ENCODE measurements at regions of chr7 and their contacts with region 1.

Region 1: GRCh38 chr7:32803406-32804141 is 88.0 kb downstream of the KBTBD2 start:
- DNase-seq: no peak
- ATAC-seq: no peak
- H3K4me3 ChIP-seq: no peak overlapping the region
- H3K27ac ChIP-seq: no peak overlapping the region
- H3K4me1 ChIP-seq: peaks cover 0 to 5% (median 0%) of the 10 kb centered on the region in 12 donors
- H3K27me3 ChIP-seq: no peaks in the 10 kb centered on the region
- CTCF ChIP-seq: no peak
- POLR2A ChIP-seq: no peak

Region 2: GRCh38 chr7:32865448-32866030 is 62.0 kb after region 1 on chr7:
- intact Hi-C with region 1: no loop called
- DNase-seq: no peak
- ATAC-seq: no peak
- H3K4me3 ChIP-seq: no peak overlapping the region
- H3K27ac ChIP-seq: no peak overlapping the region
- H3K4me1 ChIP-seq: peaks cover 0 to 22% (median 2%) of the 10 kb centered on the region in 12 donors
- H3K27me3 ChIP-seq: no peaks in the 10 kb centered on the region
- CTCF ChIP-seq: no peak
- POLR2A ChIP-seq: no peak

Region 3: GRCh38 chr7:32879460-32879859 is 75.9 kb after region 1 on chr7:
- intact Hi-C with region 1: no loop called
- DNase-seq: no peak
- ATAC-seq: peak in 3 of 4 donors; percentile 18 to 31 (median 28)
- H3K4me3 ChIP-seq: peak overlapping the region in 1 of 12 donors; percentile 5
- H3K27ac ChIP-seq: peak overlapping the region in 11 of 12 donors; percentile 9 to 73 (median 48)
- H3K4me1 ChIP-seq: peaks cover 0 to 94% (median 57%) of the 10 kb centered on the region in 12 donors
- H3K27me3 ChIP-seq: no peaks in the 10 kb centered on the region
- CTCF ChIP-seq: no peak
- POLR2A ChIP-seq: no peak

Region 4: DNA sequence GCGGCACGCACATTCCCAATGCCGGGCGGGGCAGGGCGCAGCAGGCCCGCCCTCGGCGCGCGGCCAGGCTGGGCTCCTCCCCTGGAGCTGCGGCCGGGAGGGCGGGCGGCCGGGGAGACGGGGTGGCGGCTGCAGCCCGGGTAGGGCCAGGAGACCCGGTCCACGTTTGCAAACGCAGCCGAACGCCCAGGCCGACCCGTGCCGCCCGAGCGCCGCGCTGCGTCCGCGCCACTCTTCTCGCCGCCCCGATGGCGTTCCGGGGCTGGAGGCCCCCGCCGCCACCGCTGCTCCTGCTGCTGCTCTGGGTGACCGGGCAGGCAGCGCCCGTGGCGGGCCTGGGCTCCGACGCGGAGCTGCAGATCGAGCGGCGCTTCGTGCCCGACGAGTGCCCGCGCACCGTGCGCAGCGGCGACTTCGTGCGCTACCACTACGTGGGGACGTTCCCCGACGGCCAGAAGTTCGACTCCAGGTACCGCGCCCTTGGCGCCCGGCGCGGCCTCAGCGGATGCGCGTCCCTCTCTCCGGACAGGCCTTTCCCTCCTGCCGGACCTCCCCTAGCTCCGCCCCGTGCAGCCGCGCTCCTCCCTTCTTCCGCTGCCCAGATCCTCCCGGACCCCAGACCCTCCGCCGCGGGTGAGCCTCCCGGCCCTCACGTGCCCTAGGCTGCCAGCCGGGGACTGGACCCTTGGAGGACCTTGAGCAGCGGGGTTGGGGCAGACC is 153.9 kb after region 1 on chr7 and contains the start of gene FKBP9:
- intact Hi-C with region 1: no loop called
- DNase-seq: peak; percentile 85 to 96 (median 90)
- ATAC-seq: peak; percentile 85 to 97 (median 94)
- H3K4me3 ChIP-seq: peak within 1 kb of the TSS; percentile 79 to 100 (median 92)
- H3K27ac ChIP-seq: peak within 1 kb of the TSS; percentile 89 to 100 (median 98)
- H3K4me1 ChIP-seq: peaks cover 0 to 32% (median 13%) of the 10 kb centered on the region in 12 donors
- H3K27me3 ChIP-seq: no peaks in the 10 kb centered on the region
- CTCF ChIP-seq: peak in 1 of 12 donors; percentile 6
- POLR2A ChIP-seq: peak in 1 of 2 donors; percentile 85
- total RNA-seq, gene FKBP9: 91.1 to 146 (median 130) TPM

Region 5: GRCh38 chr7:33050535-33051318 is 247.2 kb after region 1 on chr7:
- intact Hi-C with region 1: loop called in 3 of 10 experiments (anchors 5 to 10 kb)
- DNase-seq: no peak
- ATAC-seq: peak in 3 of 4 donors; percentile 48 to 76 (median 66)
- H3K4me3 ChIP-seq: peak overlapping the region in 4 of 12 donors; percentile 11 to 47 (median 14)
- H3K27ac ChIP-seq: peak overlapping the region in 8 of 12 donors; percentile 8 to 85 (median 42)
- H3K4me1 ChIP-seq: peaks cover 0 to 54% (median 12%) of the 10 kb centered on the region in 12 donors
- H3K27me3 ChIP-seq: no peaks in the 10 kb centered on the region
- CTCF ChIP-seq: peak; percentile 48 to 76 (median 68)
- POLR2A ChIP-seq: no peak